Calu3 (cell line): ENCODE measurements at regions of chr5 and their contacts with region 1.

Region 1: DNA sequence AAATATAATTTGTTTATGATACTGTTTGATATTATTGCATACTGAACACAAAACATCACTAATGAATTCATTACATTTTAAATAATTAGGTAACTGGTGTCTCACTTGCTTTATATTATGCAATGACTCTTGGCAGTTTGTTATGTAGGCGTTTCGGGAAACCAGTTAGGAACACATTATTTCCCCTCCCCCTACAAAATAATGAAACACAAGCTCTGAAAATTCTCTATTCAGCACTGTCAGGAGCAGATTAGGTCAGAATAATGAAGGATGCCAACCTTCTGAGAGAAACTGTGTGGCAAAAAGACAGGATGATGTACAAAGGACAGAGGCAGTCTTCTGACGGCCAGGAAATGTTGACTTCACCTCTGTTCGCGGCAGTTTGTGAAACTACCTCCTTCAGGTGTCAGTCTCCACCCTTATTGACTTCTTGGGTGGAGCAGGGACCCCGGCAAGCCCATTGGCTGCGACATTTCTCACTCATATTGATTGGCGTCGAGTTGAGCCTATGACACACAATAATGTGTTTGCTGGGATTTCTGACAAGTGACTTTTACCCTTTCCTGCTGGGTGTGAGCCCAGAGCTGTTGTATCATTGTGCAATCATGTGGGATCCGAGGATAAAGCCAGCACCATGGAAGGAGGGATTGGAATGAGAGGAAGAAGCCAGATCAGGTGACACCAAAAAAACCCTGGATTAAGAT is 33.9 kb downstream of the SH3PXD2B start:
- DNase-seq: peak; percentile 95
- H3K4me3 Mint-ChIP-seq: peak overlapping the region; percentile 69
- H3K27ac Mint-ChIP-seq: peak overlapping the region; percentile 91
- H3K4me1 Mint-ChIP-seq: peaks cover 21% of the 10 kb centered on the region
- H3K27me3 Mint-ChIP-seq: no peaks in the 10 kb centered on the region
- CTCF ChIP-seq: no peak

Region 2: GRCh38 chr5:171681677-171682076 is 738.7 kb before region 1 on chr5:
- CTCF ChIA-PET with region 1: interaction called, 10 read pairs
- intact Hi-C with region 1: no loop called
- DNase-seq: no peak
- H3K4me3 Mint-ChIP-seq: no peak overlapping the region
- H3K27ac Mint-ChIP-seq: no peak overlapping the region
- H3K4me1 Mint-ChIP-seq: peaks cover 6% of the 10 kb centered on the region
- H3K27me3 Mint-ChIP-seq: peaks cover 76% of the 10 kb centered on the region
- CTCF ChIP-seq: no peak

Region 3: GRCh38 chr5:172524573-172525021 is 104.2 kb after region 1 on chr5:
- CTCF ChIA-PET with region 1: no interaction called
- intact Hi-C with region 1: no loop called
- DNase-seq: no peak
- H3K4me3 Mint-ChIP-seq: no peak overlapping the region
- H3K27ac Mint-ChIP-seq: no peak overlapping the region
- H3K4me1 Mint-ChIP-seq: peaks cover 11% of the 10 kb centered on the region
- H3K27me3 Mint-ChIP-seq: peaks cover 100% of the 10 kb centered on the region
- CTCF ChIP-seq: no peak